ENCODE measurements at regions of chr3 and their contacts with region 1.

Region 1: GRCh38 chr3:9302425-9303181 is 53.2 kb upstream of the SRGAP3 start:
- DNase-seq: peak; percentile 85
- ATAC-seq: peak; percentile 99
- H3K4me3 Mint-ChIP-seq: no peak overlapping the region
- H3K27ac Mint-ChIP-seq: no peak overlapping the region
- H3K4me1 Mint-ChIP-seq: peaks cover 6% of the 10 kb centered on the region
- H3K27me3 Mint-ChIP-seq: peaks cover 10% of the 10 kb centered on the region

Region 2: DNA sequence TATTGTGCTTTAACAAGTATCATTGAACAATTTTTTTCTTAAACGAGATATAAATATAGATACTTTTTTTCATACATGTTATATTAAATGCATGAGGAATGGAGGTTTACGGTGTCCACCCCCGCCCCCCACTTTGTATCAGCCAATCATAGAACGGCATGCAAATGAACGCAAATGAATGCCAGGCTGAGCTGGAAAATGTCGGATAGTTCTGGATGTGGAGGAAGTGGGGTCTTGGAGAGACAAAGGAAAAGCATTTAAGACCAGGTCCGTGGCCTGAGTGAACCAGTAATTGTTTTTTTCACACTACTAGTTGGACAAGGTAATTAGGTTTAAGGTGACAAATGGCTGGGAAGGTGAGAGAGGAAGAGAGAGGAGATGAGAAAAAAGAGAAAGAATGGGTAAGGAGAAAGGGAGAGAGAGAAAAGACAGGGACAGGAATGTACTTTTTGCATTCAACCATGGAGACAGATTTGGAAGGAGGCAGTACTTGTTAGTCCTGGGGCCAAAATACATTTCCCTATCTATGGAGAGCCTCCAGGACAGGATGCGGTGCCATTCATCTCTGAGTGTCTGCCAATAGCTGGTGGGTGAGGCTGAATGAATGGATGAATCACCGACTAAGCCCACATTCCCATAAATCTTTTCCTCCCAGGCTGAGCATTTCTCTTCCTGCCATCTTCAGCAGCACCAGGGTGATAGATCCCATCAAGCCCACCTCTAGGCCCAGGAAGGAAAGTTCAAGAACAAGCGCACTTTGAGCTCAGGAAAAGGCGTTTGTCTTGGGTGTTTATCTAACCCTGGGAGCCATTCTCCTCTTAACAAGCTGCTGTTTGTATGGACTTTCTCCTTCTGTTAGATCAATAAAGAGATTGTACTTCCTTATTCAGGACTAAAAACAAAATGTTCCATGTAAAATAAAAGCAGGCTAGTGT is 337.9 kb before region 1 on chr3:
- CTCF ChIA-PET with region 1: interaction called, 116 read pairs
- POLR2A ChIA-PET with region 1: interaction called, 3 read pairs
- DNase-seq: no peak
- ATAC-seq: no peak
- H3K4me3 Mint-ChIP-seq: no peak overlapping the region
- H3K27ac Mint-ChIP-seq: no peak overlapping the region
- H3K4me1 Mint-ChIP-seq: peaks cover 32% of the 10 kb centered on the region
- H3K27me3 Mint-ChIP-seq: peaks cover 10% of the 10 kb centered on the region

Region 3: GRCh38 chr3:8982509-8982908 is 320.1 kb before region 1 on chr3:
- CTCF ChIA-PET with region 1: interaction called, 85 read pairs
- POLR2A ChIA-PET with region 1: no interaction called
- DNase-seq: no peak
- ATAC-seq: no peak
- H3K4me3 Mint-ChIP-seq: no peak overlapping the region
- H3K27ac Mint-ChIP-seq: no peak overlapping the region
- H3K4me1 Mint-ChIP-seq: peaks cover under 1% of the 10 kb centered on the region
- H3K27me3 Mint-ChIP-seq: peaks cover 7% of the 10 kb centered on the region

Region 4: GRCh38 chr3:9080163-9080562 is 222.4 kb before region 1 on chr3:
- CTCF ChIA-PET with region 1: interaction called, 11 read pairs
- POLR2A ChIA-PET with region 1: no interaction called
- DNase-seq: no peak
- ATAC-seq: no peak
- H3K4me3 Mint-ChIP-seq: no peak overlapping the region
- H3K27ac Mint-ChIP-seq: no peak overlapping the region
- H3K4me1 Mint-ChIP-seq: peaks cover 4% of the 10 kb centered on the region
- H3K27me3 Mint-ChIP-seq: peaks cover 6% of the 10 kb centered on the region

Region 5: GRCh38 chr3:9214599-9214998 is 88.0 kb before region 1 on chr3:
- CTCF ChIA-PET with region 1: no interaction called
- POLR2A ChIA-PET with region 1: no interaction called
- DNase-seq: no peak
- ATAC-seq: no peak
- H3K4me3 Mint-ChIP-seq: no peak overlapping the region
- H3K27ac Mint-ChIP-seq: no peak overlapping the region
- H3K4me1 Mint-ChIP-seq: peaks cover 10% of the 10 kb centered on the region
- H3K27me3 Mint-ChIP-seq: no peaks in the 10 kb centered on the region

Region 6: GRCh38 chr3:9249273-9250192 is 53.1 kb before region 1 on chr3 and contains the start of gene SRGAP3:
- CTCF ChIA-PET with region 1: interaction called, 17 read pairs
- POLR2A ChIA-PET with region 1: no interaction called
- DNase-seq: peak; percentile 92
- ATAC-seq: peak; percentile 100
- H3K4me3 Mint-ChIP-seq: peak within 1 kb of the TSS; percentile 82
- H3K27ac Mint-ChIP-seq: peak within 1 kb of the TSS; percentile 40
- H3K4me1 Mint-ChIP-seq: peaks cover 38% of the 10 kb centered on the region
- H3K27me3 Mint-ChIP-seq: peaks cover 23% of the 10 kb centered on the region
- total RNA-seq, gene SRGAP3: 5.3 to 5.9 TPM

Region 7: DNA sequence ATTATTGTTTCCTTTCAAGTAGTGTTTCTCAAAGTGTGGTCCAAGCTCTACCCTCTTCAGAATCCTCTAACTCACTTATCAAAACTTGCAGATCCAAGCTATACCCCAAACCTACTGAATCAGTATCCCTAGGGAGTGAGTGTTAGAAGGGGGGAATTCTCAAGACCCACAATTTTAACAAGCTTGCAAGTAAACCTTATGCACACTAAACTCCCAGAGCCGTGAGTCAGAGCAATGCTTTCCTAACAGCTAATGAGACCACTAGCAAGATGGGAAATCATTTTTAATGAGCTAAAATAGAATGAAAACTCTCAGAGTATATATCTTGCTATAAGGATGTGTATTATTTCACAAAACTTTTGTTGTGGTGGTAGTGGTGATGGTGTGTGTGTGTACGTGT is 12.0 kb before region 1 on chr3:
- CTCF ChIA-PET with region 1: interaction called, 16 read pairs
- POLR2A ChIA-PET with region 1: no interaction called
- DNase-seq: no peak
- ATAC-seq: no peak
- H3K4me3 Mint-ChIP-seq: no peak overlapping the region
- H3K27ac Mint-ChIP-seq: no peak overlapping the region
- H3K4me1 Mint-ChIP-seq: no peaks in the 10 kb centered on the region
- H3K27me3 Mint-ChIP-seq: peaks cover 21% of the 10 kb centered on the region

Region 8: GRCh38 chr3:9552252-9552999 is 249.8 kb after region 1 on chr3:
- CTCF ChIA-PET with region 1: no interaction called
- POLR2A ChIA-PET with region 1: no interaction called
- DNase-seq: peak; percentile 74
- ATAC-seq: peak; percentile 79
- H3K4me3 Mint-ChIP-seq: no peak overlapping the region
- H3K27ac Mint-ChIP-seq: no peak overlapping the region
- H3K4me1 Mint-ChIP-seq: peaks cover 2% of the 10 kb centered on the region
- H3K27me3 Mint-ChIP-seq: peaks cover 34% of the 10 kb centered on the region

Region 9: GRCh38 chr3:9704347-9705322 is 402.0 kb after region 1 on chr3:
- CTCF ChIA-PET with region 1: no interaction called
- POLR2A ChIA-PET with region 1: no interaction called
- DNase-seq: peak; percentile 27
- ATAC-seq: peak; percentile 57
- H3K4me3 Mint-ChIP-seq: no peak overlapping the region
- H3K27ac Mint-ChIP-seq: no peak overlapping the region
- H3K4me1 Mint-ChIP-seq: peaks cover 6% of the 10 kb centered on the region
- H3K27me3 Mint-ChIP-seq: peaks cover 31% of the 10 kb centered on the region